ENCODE measurements at regions of chr9 and their contacts with region 1.

Region 1: DNA sequence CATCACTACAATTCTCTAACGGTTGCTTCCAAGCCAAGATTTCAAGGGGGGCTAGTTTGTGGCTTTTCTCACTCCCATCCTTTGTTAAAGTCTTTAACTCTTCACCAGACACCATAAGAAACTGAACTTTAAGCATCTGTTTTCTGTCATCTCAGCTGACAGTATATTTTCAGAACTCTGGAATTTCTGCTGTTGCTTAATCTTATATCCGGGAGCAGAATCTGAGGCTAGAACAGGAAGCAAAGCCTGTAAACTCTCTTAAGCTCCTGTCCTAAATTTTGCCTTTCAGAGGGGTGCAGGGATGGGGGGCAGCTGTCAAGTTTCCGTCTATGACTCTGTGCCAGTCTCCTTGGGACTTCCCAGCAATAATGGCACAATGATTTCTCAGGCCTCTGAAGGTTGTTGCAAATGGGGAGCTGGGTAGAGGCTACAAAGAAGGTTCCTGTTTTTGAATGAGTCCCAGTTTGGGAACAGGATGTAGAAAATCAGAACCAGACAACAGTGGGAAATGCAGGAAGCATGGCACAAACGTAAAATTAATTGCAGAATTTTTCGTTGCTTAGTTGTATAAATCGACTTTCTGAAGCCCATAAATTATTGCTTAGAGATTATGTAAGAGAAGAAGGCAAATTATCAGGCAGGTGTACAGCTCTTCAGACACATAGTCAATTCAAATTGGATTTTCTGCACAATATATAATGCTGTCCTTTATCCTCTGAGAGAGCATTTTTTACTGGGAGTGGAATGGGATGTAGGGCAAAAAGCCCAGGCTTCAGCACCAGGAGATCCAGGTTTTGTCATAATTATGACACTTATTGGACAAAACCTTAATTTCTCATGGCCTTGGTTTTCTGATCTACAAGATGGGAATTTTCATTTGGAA is 430.9 kb downstream of the DMAC1 start:
- DNase-seq: no peak
- ATAC-seq: no peak
- H3K4me3 ChIP-seq: no peak overlapping the region
- H3K27ac ChIP-seq: no peak overlapping the region
- H3K4me1 ChIP-seq: peaks cover 29% of the 10 kb centered on the region
- H3K27me3 ChIP-seq: no peaks in the 10 kb centered on the region
- CTCF ChIP-seq: no peak

Region 2: GRCh38 chr9:6479959-6480358 is 888.7 kb before region 1 on chr9:
- intact Hi-C with region 1: no loop called
- DNase-seq: no peak
- ATAC-seq: no peak
- H3K4me3 ChIP-seq: no peak overlapping the region
- H3K27ac ChIP-seq: no peak overlapping the region
- H3K4me1 ChIP-seq: no peaks in the 10 kb centered on the region
- H3K27me3 ChIP-seq: no peaks in the 10 kb centered on the region
- CTCF ChIP-seq: no peak

Region 3: GRCh38 chr9:7075154-7075553 is 293.5 kb before region 1 on chr9:
- intact Hi-C with region 1: loop called in 1 of 2 experiments (anchors 10 kb)
- DNase-seq: no peak
- ATAC-seq: peak in 3 of 4 donors; percentile 35 to 73 (median 53)
- H3K4me3 ChIP-seq: no peak overlapping the region
- H3K27ac ChIP-seq: no peak overlapping the region
- H3K4me1 ChIP-seq: peaks cover 6% of the 10 kb centered on the region
- H3K27me3 ChIP-seq: no peaks in the 10 kb centered on the region
- CTCF ChIP-seq: no peak

Region 4: GRCh38 chr9:7266911-7267595 is 101.6 kb before region 1 on chr9:
- intact Hi-C with region 1: no loop called
- DNase-seq: no peak
- ATAC-seq: peak in 1 of 4 donors; percentile 34
- H3K4me3 ChIP-seq: no peak overlapping the region
- H3K27ac ChIP-seq: no peak overlapping the region
- H3K4me1 ChIP-seq: no peaks in the 10 kb centered on the region
- H3K27me3 ChIP-seq: peaks cover 0 to 3% (median 0%) of the 10 kb centered on the region in 3 donors
- CTCF ChIP-seq: no peak

Measured in psoas muscle (tissue), 8 donors.